ENCODE measurements at regions of chr19 and their contacts with region 1.

Region 1: GRCh38 chr19:42396381-42397262 is 6.5 kb upstream of the CNFN start:
- DNase-seq: peak; percentile 97
- ATAC-seq: peak; percentile 99
- H3K4me3 Mint-ChIP-seq: peak overlapping the region; percentile 88
- H3K27ac Mint-ChIP-seq: peak overlapping the region; percentile 90
- H3K4me1 Mint-ChIP-seq: peaks cover 18% of the 10 kb centered on the region
- H3K27me3 Mint-ChIP-seq: peaks cover 2% of the 10 kb centered on the region

Region 2: DNA sequence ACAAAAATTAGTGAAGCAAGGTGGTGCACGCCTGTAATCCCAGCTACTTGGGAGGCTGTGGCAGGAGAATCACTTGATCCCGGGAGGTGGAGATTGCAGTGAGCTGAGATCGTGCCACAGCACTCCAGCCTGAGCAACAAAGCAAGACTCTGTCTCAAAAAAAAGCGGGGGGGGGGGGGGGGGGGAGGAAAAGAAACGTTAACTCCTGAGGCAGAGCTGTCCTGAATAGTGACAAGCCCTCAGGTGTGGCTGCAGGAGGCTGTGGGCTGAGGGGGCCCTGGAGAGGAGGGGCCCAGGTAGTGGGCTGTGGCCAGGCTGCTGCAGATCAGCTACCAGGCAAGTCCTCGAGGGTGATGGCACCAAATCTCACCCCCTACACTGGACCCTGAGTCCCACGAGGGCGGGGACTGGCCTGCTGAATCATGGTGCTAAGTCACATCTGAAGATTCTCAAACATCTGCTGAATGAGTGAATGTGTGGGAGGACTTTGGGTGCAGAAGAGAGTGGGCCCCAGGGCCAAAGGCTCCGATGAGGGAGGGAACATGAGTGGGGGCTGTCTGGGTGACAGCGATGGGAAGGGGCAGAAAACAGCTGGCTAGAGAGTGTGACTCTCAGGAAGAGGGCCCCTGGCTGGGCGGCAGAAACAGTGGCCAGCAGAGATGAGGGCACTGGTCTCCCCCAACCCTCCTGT is 378.0 kb before region 1 on chr19:
- CTCF ChIA-PET with region 1: no interaction called
- POLR2A ChIA-PET with region 1: no interaction called
- intact Hi-C with region 1: no loop called
- DNase-seq: no peak
- ATAC-seq: no peak
- H3K4me3 Mint-ChIP-seq: no peak overlapping the region
- H3K27ac Mint-ChIP-seq: no peak overlapping the region
- H3K4me1 Mint-ChIP-seq: no peaks in the 10 kb centered on the region
- H3K27me3 Mint-ChIP-seq: no peaks in the 10 kb centered on the region

Region 3: GRCh38 chr19:42121656-42122069 is 275.0 kb before region 1 on chr19:
- CTCF ChIA-PET with region 1: no interaction called
- POLR2A ChIA-PET with region 1: no interaction called
- intact Hi-C with region 1: loop called in 1 of 2 experiments (anchors 5 kb)
- DNase-seq: peak; percentile 93
- ATAC-seq: peak; percentile 81
- H3K4me3 Mint-ChIP-seq: peak overlapping the region; percentile 80
- H3K27ac Mint-ChIP-seq: peak overlapping the region; percentile 94
- H3K4me1 Mint-ChIP-seq: peaks cover 57% of the 10 kb centered on the region
- H3K27me3 Mint-ChIP-seq: no peaks in the 10 kb centered on the region

Region 4: GRCh38 chr19:42301656-42302203 is 94.9 kb before region 1 on chr19 and contains the start of gene PRR19:
- CTCF ChIA-PET with region 1: no interaction called
- POLR2A ChIA-PET with region 1: no interaction called
- intact Hi-C with region 1: no loop called
- DNase-seq: peak; percentile 50
- ATAC-seq: peak; percentile 25
- H3K4me3 Mint-ChIP-seq: peak within 1 kb of the TSS; percentile 83
- H3K27ac Mint-ChIP-seq: peak within 1 kb of the TSS; percentile 85
- H3K4me1 Mint-ChIP-seq: peaks cover 19% of the 10 kb centered on the region
- H3K27me3 Mint-ChIP-seq: no peaks in the 10 kb centered on the region
- total RNA-seq, gene PRR19: 0.63 to 1.0 TPM